ENCODE measurements at regions of chr5 and their contacts with region 1.

Region 1: GRCh38 chr5:90866333-90866732 is 307.7 kb downstream of the ADGRV1 start:
- DNase-seq: peak; percentile 48
- H3K4me3 ChIP-seq: no peak overlapping the region; a peak in 1 of 4 replicates
- H3K27ac ChIP-seq: no peak overlapping the region; a peak in 1 of 4 replicates
- H3K4me1 ChIP-seq: peaks cover 0 to 6% of the 10 kb centered on the region in 2 experiments; a peak in 2 of 4 replicates
- H3K27me3 ChIP-seq: no peaks in the 10 kb centered on the region
- CTCF ChIP-seq: peak; percentile 59
- EP300 ChIP-seq: no peak
- RAD21 ChIP-seq: peak; percentile 82

Region 2: GRCh38 chr5:90854169-90854568 is 12.2 kb before region 1 on chr5:
- CTCF ChIA-PET with region 1: interaction called, 12 read pairs
- POLR2A ChIA-PET with region 1: no interaction called
- DNase-seq: no peak
- H3K4me3 ChIP-seq: no peak overlapping the region
- H3K27ac ChIP-seq: no peak overlapping the region
- H3K4me1 ChIP-seq: peaks cover 0 to 2% of the 10 kb centered on the region in 2 experiments; a peak in 2 of 4 replicates
- H3K27me3 ChIP-seq: no peaks in the 10 kb centered on the region
- CTCF ChIP-seq: no peak
- EP300 ChIP-seq: no peak
- RAD21 ChIP-seq: no peak

Region 3: GRCh38 chr5:90881626-90882150 is 15.4 kb after region 1 on chr5:
- CTCF ChIA-PET with region 1: interaction called, 21 read pairs
- POLR2A ChIA-PET with region 1: no interaction called
- DNase-seq: no peak
- H3K4me3 ChIP-seq: no peak overlapping the region
- H3K27ac ChIP-seq: no peak overlapping the region
- H3K4me1 ChIP-seq: no peaks in the 10 kb centered on the region
- H3K27me3 ChIP-seq: no peaks in the 10 kb centered on the region
- CTCF ChIP-seq: no peak
- EP300 ChIP-seq: no peak
- RAD21 ChIP-seq: no peak

Region 4: DNA sequence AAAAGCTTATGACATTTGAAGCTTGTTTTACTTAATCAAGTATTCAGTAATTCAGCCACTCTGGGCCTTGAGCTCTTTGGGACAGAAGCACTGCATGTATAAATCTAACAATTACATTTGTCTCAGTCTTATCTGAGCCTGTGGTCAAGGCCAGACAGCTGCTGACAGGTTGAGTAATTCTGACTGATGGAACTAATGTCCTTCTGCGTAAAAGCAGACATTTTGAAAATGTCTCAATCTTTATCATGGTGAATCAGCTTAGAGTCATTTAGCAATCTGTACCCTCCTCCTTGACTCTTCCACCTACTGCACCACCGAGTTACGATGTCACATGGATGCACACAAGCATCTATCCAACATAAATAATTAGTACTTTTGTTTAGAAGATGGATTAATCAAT is 116.8 kb after region 1 on chr5:
- CTCF ChIA-PET with region 1: interaction called, 10 read pairs
- POLR2A ChIA-PET with region 1: no interaction called
- DNase-seq: peak; percentile 65
- H3K4me3 ChIP-seq: no peak overlapping the region
- H3K27ac ChIP-seq: peak overlapping the region in 1 of 2 experiments; percentile 96; a peak in 2 of 4 replicates
- H3K4me1 ChIP-seq: peaks cover 0 to 19% of the 10 kb centered on the region in 2 experiments; a peak in 2 of 4 replicates
- H3K27me3 ChIP-seq: no peaks in the 10 kb centered on the region
- CTCF ChIP-seq: no peak
- EP300 ChIP-seq: peak; percentile 56 to 98; a peak in 3 of 4 replicates
- RAD21 ChIP-seq: peak; percentile 21; the same call in 1 of the 2 replicates

Measured in SK-N-SH (cell line).